PC-3 (cell line): ENCODE measurements at regions of chr21 and their contacts with region 1.

Region 1: GRCh38 chr21:14864211-14865021 is 200.4 kb downstream of the NRIP1 start:
- DNase-seq: peak; percentile 80
- ATAC-seq: peak; percentile 75
- H3K4me3 ChIP-seq: no peak overlapping the region
- H3K27ac ChIP-seq: peak overlapping the region; percentile 41
- H3K4me1 ChIP-seq: peaks cover 28% of the 10 kb centered on the region
- H3K27me3 ChIP-seq: no peaks in the 10 kb centered on the region
- CTCF ChIP-seq: peak; percentile 82

Region 2: GRCh38 chr21:14403681-14404318 is 460.6 kb before region 1 on chr21:
- CTCF ChIA-PET with region 1: no interaction called
- POLR2A ChIA-PET with region 1: no interaction called
- intact Hi-C with region 1: loop called (anchors 2 kb)
- DNase-seq: peak; percentile 65
- ATAC-seq: peak; percentile 80
- H3K4me3 ChIP-seq: no peak overlapping the region
- H3K27ac ChIP-seq: no peak overlapping the region
- H3K4me1 ChIP-seq: no peaks in the 10 kb centered on the region
- H3K27me3 ChIP-seq: no peaks in the 10 kb centered on the region
- CTCF ChIP-seq: peak; percentile 86

Region 3: DNA sequence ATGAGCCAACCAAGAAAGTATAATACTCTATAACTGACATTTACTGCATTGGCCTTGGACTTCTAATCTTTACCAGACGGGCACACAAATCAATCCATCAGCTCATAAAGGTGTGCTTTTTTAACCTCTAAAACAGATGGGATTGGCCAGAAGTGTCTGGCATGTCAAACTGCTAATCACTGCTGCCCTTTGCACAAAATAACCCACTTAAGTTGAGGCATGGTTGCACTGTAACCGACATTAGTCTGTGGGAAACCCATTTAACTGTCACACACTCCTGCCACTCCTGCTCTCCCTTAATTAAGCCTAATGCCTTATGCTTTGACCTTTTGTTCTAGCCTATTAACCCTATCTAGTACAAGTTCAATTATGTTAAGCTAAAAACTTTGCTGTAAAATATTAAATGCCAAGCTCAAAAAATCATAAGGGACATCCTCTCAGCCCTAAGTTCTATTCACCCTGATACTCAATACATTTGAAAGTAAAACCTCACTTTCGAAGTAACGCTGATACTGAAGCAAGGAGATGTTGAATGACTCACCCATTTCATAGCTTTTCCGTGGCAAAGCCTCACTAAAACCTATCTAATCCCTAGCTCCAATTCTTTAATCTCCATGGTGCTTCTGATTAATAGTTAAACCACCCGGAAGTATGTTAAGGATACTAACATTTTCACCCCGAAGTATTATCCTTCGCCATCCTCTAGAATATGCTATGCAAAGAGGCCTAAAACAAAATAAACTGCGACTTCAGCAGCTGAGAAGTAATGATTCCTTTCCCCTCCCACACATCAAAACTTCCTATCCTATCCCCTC is 187.4 kb after region 1 on chr21:
- CTCF ChIA-PET with region 1: interaction called, 4 read pairs
- POLR2A ChIA-PET with region 1: no interaction called
- intact Hi-C with region 1: loop called (anchors 2 kb)
- DNase-seq: peak; percentile 61
- ATAC-seq: peak; percentile 43
- H3K4me3 ChIP-seq: peak overlapping the region; percentile 59
- H3K27ac ChIP-seq: peak overlapping the region; percentile 36
- H3K4me1 ChIP-seq: peaks cover 58% of the 10 kb centered on the region
- H3K27me3 ChIP-seq: no peaks in the 10 kb centered on the region
- CTCF ChIP-seq: no peak

Region 4: DNA sequence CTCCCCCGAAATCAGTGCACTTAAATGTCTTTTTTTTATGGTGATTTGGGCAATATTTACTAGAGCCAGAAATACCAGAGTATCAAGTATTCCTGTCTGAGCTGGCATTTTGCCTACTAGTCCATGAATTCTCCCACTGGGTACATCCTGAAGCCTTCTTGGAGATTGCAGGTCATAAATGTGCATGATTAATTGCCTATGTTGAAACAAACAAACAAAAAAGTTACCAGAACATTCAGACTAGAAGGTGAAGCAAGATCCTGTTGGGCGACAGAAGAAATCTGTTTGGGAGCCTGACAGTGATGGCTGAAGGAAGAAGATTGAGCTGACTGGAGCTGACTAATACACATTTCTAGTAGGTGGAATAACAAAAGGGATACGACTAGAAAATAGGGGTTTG is 327.8 kb after region 1 on chr21:
- CTCF ChIA-PET with region 1: no interaction called
- POLR2A ChIA-PET with region 1: no interaction called
- intact Hi-C with region 1: loop called (anchors 5 kb)
- DNase-seq: peak; percentile 99
- ATAC-seq: peak; percentile 77
- H3K4me3 ChIP-seq: peak overlapping the region; percentile 58
- H3K27ac ChIP-seq: peak overlapping the region; percentile 95
- H3K4me1 ChIP-seq: peaks cover 27% of the 10 kb centered on the region
- H3K27me3 ChIP-seq: no peaks in the 10 kb centered on the region
- CTCF ChIP-seq: no peak

Region 5: DNA sequence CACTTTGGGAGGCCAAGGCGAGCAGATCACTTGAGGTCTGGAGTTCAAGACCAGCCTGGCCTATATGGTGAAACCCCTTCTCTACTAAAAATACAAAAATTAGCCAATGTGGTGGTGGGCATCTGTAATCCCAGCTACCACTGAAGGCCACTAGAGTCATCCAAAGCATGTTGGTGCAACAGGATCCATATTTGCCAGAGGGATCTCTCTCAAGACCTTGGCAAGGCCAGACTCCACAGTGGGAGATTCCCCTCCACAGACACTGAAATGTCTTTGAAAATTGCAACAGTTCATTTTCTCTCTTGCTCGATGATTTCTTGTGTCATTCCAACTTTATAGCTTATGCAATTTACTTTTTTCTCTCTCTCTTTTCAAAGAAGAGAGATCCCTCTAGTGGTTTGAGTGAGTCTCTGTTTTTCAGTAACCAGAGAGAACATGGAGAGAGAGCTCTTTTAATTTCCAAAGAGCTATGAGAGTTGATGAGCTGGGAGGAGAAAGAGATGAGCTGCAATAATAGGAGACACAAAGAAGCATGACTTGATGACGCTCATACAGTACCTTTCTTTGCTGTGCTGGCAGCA is 688.6 kb after region 1 on chr21:
- CTCF ChIA-PET with region 1: interaction called, 3 read pairs
- POLR2A ChIA-PET with region 1: no interaction called
- intact Hi-C with region 1: loop called (anchors 5 kb)
- DNase-seq: peak; percentile 61
- ATAC-seq: peak; percentile 72
- H3K4me3 ChIP-seq: no peak overlapping the region
- H3K27ac ChIP-seq: no peak overlapping the region
- H3K4me1 ChIP-seq: no peaks in the 10 kb centered on the region
- H3K27me3 ChIP-seq: no peaks in the 10 kb centered on the region
- CTCF ChIP-seq: peak; percentile 91